Breast epithelium (tissue), 4 donors: ENCODE measurements at regions of chr2 and their contacts with region 1.

Region 1: GRCh38 chr2:190408538-190409271 is 550 bp downstream of the MFSD6 start:
- DNase-seq: peak; percentile 56
- H3K4me3 ChIP-seq: peak overlapping the region; percentile 80 to 98 (median 85)
- H3K27ac ChIP-seq: peak overlapping the region; percentile 97 to 99
- H3K4me1 ChIP-seq: peaks cover 3 to 7% of the 10 kb centered on the region in 2 donors
- H3K27me3 ChIP-seq: no peaks in the 10 kb centered on the region
- CTCF ChIP-seq: no peak
- POLR2A ChIP-seq: peak; percentile 38

Region 2: GRCh38 chr2:190344276-190344827 is 64.4 kb before region 1 on chr2:
- intact Hi-C with region 1: no loop called
- DNase-seq: peak in 1 of 2 donors; percentile 58
- H3K4me3 ChIP-seq: peak overlapping the region; percentile 69 to 84 (median 73)
- H3K27ac ChIP-seq: peak overlapping the region; percentile 95 to 96
- H3K4me1 ChIP-seq: no peaks in the 10 kb centered on the region
- H3K27me3 ChIP-seq: no peaks in the 10 kb centered on the region
- CTCF ChIP-seq: peak in 2 of 3 donors; percentile 19 to 30
- POLR2A ChIP-seq: no peak

Region 3: GRCh38 chr2:190396271-190396670 is 12.4 kb before region 1 on chr2:
- intact Hi-C with region 1: no loop called
- DNase-seq: no peak
- H3K4me3 ChIP-seq: no peak overlapping the region
- H3K27ac ChIP-seq: no peak overlapping the region
- H3K4me1 ChIP-seq: no peaks in the 10 kb centered on the region
- H3K27me3 ChIP-seq: no peaks in the 10 kb centered on the region
- CTCF ChIP-seq: no peak
- POLR2A ChIP-seq: no peak

Region 4: DNA sequence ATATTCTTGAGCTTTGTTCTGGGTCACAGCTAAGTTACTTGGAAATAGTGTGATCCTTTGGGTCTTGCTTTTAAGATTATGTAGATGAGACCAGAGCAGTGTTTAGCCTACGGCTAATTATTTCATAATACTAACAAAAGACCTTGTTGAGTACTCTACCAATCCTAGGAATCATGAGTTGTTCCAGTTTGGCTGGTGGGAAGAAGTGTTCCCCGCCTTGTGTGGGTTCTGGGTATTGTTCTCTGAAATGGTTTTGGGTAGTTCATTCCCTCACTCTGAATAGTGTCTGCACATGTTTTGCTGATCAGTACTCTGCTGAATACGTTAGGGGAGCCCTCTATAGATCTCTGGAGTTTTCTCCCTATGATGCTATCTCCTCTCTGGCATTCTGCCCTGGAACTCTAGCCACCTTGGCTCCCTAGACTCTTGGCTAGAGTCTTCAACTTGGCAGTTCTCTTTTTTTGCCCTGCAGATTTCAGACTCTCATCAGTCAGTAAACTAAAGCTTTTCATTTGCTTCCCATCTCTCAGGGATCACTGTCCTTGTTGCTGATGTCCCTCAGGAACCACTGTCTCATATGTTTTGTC is 77.4 kb after region 1 on chr2:
- intact Hi-C with region 1: loop called (anchors 10 kb)
- DNase-seq: no peak
- H3K4me3 ChIP-seq: no peak overlapping the region
- H3K27ac ChIP-seq: peak overlapping the region; percentile 40 to 80
- H3K4me1 ChIP-seq: no peaks in the 10 kb centered on the region
- H3K27me3 ChIP-seq: no peaks in the 10 kb centered on the region
- CTCF ChIP-seq: peak in 2 of 3 donors; percentile 25 to 38
- POLR2A ChIP-seq: no peak